B cell (primary cell): ENCODE measurements at regions of chr9 and their contacts with region 1.

Region 1: GRCh38 chr9:36400332-36401163 is 479 bp upstream of the RNF38 start:
- DNase-seq: peak; percentile 97
- ATAC-seq: peak; percentile 79
- H3K4me3 ChIP-seq: peak overlapping the region; percentile 72 to 90 (median 81)
- H3K4me3 Mint-ChIP-seq: peak overlapping the region; percentile 88
- H3K27ac ChIP-seq: peak overlapping the region; percentile 94 to 98
- H3K27ac Mint-ChIP-seq: peak overlapping the region; percentile 93
- H3K4me1 ChIP-seq: peaks cover 18 to 21% of the 10 kb centered on the region in 2 donors
- H3K4me1 Mint-ChIP-seq: peaks cover 34% of the 10 kb centered on the region
- H3K27me3 ChIP-seq: no peaks in the 10 kb centered on the region
- H3K27me3 Mint-ChIP-seq: no peaks in the 10 kb centered on the region
- CTCF ChIP-seq: no peak

Region 2: GRCh38 chr9:35871497-35871896 is 529.1 kb before region 1 on chr9:
- CTCF ChIA-PET with region 1: no interaction called
- POLR2A ChIA-PET with region 1: no interaction called
- intact Hi-C with region 1: no loop called
- DNase-seq: no peak
- ATAC-seq: no peak
- H3K4me3 ChIP-seq: no peak overlapping the region
- H3K4me3 Mint-ChIP-seq: no peak overlapping the region
- H3K27ac ChIP-seq: no peak overlapping the region
- H3K27ac Mint-ChIP-seq: no peak overlapping the region
- H3K4me1 ChIP-seq: no peaks in the 10 kb centered on the region
- H3K4me1 Mint-ChIP-seq: no peaks in the 10 kb centered on the region
- H3K27me3 ChIP-seq: no peaks in the 10 kb centered on the region
- H3K27me3 Mint-ChIP-seq: peaks cover 7% of the 10 kb centered on the region
- CTCF ChIP-seq: no peak

Region 3: DNA sequence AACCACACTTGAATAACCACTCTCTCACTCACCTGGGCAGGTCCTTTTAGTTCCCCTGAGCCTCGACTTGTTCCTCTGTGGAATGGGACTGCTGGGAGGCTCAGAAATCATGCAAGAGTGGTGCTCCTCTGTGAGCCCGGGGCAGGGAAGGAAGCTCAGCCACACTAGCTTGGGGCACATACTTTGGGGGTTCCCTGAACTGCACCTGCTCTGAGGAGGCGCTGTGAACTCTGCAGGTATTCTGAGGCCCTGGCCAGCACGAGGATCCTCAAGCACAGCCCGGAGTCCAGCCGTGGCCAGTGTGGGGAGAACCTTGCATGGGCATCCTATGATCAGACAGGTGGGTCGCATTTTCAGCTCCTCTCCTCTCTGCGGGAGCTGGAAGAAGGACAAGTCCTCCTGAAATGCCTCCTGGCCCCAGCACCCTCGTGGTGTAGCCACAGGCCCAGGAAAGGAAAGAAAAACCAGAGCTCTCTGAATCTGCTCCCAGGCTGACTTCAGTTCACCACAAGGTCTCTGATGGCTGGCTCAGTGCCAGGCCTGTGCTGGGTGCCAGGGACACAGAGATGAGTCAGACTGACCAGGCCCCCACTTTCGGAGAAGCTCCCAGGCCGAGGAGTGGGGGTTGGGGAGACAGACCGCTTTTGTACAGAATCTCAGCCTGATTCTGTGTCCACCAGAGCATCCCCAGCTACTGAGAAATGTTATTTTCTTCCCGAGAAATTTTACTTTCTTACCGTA is 252.1 kb before region 1 on chr9:
- CTCF ChIA-PET with region 1: no interaction called
- POLR2A ChIA-PET with region 1: no interaction called
- intact Hi-C with region 1: loop called (anchors 5 kb)
- DNase-seq: no peak
- ATAC-seq: no peak
- H3K4me3 ChIP-seq: no peak overlapping the region
- H3K4me3 Mint-ChIP-seq: no peak overlapping the region
- H3K27ac ChIP-seq: no peak overlapping the region
- H3K27ac Mint-ChIP-seq: no peak overlapping the region
- H3K4me1 ChIP-seq: peaks cover 51 to 82% of the 10 kb centered on the region in 2 donors
- H3K4me1 Mint-ChIP-seq: peaks cover 76% of the 10 kb centered on the region
- H3K27me3 ChIP-seq: no peaks in the 10 kb centered on the region
- H3K27me3 Mint-ChIP-seq: no peaks in the 10 kb centered on the region
- CTCF ChIP-seq: no peak

Region 4: GRCh38 chr9:36572515-36573418 is 172.2 kb after region 1 on chr9 and contains the start of gene MELK:
- CTCF ChIA-PET with region 1: no interaction called
- POLR2A ChIA-PET with region 1: no interaction called
- intact Hi-C with region 1: loop called (anchors 5 kb)
- DNase-seq: peak; percentile 86
- ATAC-seq: peak; percentile 90
- H3K4me3 ChIP-seq: peak within 1 kb of the TSS; percentile 67 to 97 (median 81)
- H3K4me3 Mint-ChIP-seq: peak within 1 kb of the TSS; percentile 90
- H3K27ac ChIP-seq: peak within 1 kb of the TSS; percentile 18 to 67
- H3K27ac Mint-ChIP-seq: peak within 1 kb of the TSS; percentile 71
- H3K4me1 ChIP-seq: peaks cover 8 to 16% of the 10 kb centered on the region in 2 donors
- H3K4me1 Mint-ChIP-seq: peaks cover 13% of the 10 kb centered on the region
- H3K27me3 ChIP-seq: peaks cover 0 to 2% (median 0%) of the 10 kb centered on the region in 4 experiments
- H3K27me3 Mint-ChIP-seq: peaks cover 4% of the 10 kb centered on the region
- CTCF ChIP-seq: no peak
- total RNA-seq, gene MELK: 0.17 TPM in 1 of 2 replicates, not detected in the other